ENCODE measurements at regions of chr10 and their contacts with region 1.

Region 1: GRCh38 chr10:70880077-70880534 is 8.3 kb downstream of the PCBD1 start:
- DNase-seq: peak; percentile 55 to 83
- ATAC-seq: peak; percentile 70 to 86 (median 79)
- H3K4me3 ChIP-seq: no peak overlapping the region
- H3K27ac ChIP-seq: no peak overlapping the region
- H3K4me1 ChIP-seq: peaks cover 0 to 9% (median 0%) of the 10 kb centered on the region in 9 donors
- H3K27me3 ChIP-seq: no peaks in the 10 kb centered on the region
- CTCF ChIP-seq: peak; percentile 77 to 96 (median 93)

Region 2: DNA sequence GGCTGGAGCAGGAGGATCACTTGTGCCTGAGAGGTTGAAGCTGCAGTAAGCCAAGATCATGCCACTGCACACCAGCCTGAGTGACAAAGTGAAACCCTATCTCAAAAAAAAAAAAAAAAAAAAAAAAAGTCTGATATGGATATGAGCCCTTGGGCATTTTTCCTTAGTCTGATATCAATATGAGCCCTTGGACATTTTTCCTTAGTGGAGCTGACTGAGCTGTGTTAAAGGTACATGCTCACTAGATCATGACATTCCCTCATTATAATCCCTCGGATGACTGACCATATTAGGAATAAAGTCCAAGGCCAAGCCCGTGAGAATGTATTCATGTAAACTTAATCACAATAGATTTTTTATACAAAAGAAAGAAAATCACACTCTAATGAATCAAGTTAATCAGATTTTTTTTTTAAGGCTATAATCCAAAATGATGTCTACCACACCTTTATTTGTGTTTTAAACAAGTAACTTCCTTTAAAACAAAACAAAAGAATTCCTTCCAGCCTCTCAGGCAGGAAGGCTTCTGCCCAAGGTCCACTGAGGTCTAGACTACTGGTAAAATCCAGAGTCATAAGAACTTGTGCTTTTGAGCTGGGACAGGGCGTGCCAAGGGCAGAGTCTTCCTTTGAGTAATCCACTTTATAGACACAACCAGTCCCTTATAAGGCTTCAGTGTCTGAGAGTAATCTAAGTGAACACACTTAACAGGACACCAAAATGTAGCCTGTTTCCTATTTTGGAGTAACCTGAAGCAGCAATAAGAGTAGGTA is 652.4 kb before region 1 on chr10:
- intact Hi-C with region 1: loop called in 1 of 10 experiments (anchors 10 kb)
- DNase-seq: no peak
- ATAC-seq: peak in 4 of 8 donors; percentile 29 to 56 (median 42)
- H3K4me3 ChIP-seq: no peak overlapping the region
- H3K27ac ChIP-seq: peak overlapping the region in 4 of 10 donors; percentile 10 to 37 (median 20)
- H3K4me1 ChIP-seq: peaks cover 0 to 53% (median 32%) of the 10 kb centered on the region in 9 donors
- H3K27me3 ChIP-seq: no peaks in the 10 kb centered on the region
- CTCF ChIP-seq: no peak

Region 3: GRCh38 chr10:70272925-70273316 is 607.2 kb before region 1 on chr10:
- intact Hi-C with region 1: no loop called
- DNase-seq: no peak
- ATAC-seq: peak; percentile 16 to 57 (median 34)
- H3K4me3 ChIP-seq: no peak overlapping the region
- H3K27ac ChIP-seq: no peak overlapping the region
- H3K4me1 ChIP-seq: peaks cover 0 to 20% (median 4%) of the 10 kb centered on the region in 9 donors
- H3K27me3 ChIP-seq: no peaks in the 10 kb centered on the region
- CTCF ChIP-seq: peak; percentile 25 to 68 (median 54)

Region 4: DNA sequence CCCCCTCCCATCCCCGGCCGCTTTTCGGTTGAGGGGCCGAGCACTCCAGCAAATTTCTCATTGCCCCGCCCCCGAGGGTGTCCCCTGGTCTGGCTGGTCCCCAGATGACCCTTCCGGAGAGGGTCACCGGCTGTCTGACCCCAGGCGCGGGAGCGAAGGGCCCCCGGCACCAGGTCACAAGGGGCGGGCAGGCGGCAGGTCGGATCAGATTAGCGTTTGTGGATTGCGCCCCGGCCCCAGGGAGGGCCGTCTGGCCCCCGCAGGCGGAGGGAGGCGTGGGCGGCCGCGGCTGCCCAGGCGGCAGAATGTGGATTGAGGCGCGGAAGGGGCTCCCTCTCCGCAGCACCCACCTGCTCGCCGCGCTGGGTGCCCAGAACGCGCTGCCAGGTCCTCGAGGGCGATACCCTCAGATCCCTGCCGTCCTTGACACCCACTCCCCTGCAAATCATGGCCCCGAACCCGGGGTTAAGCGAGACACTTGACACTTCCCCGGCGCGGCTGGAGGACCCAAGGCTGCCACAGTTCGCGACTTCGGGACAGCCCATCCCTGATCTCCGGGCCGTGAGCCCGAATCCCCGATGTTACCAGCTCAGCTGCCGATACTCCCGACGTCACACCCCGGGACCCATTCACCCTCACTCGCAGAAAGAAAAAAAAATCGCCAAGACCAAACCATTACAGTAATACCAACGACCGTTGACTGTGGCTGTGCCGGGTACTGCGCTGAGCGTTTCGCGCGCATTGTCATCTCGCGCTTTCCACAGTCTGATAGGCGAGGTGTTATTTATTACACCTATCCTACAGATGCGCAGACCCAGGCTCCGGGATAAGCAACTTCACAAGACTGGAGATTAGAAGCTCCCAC is 439.6 kb before region 1 on chr10:
- intact Hi-C with region 1: loop called in 1 of 10 experiments (anchors 10 kb)
- DNase-seq: no peak
- ATAC-seq: peak in 6 of 8 donors; percentile 3 to 25 (median 11)
- H3K4me3 ChIP-seq: peak overlapping the region; percentile 2 to 53 (median 40)
- H3K27ac ChIP-seq: no peak overlapping the region
- H3K4me1 ChIP-seq: peaks cover 6 to 25% (median 17%) of the 10 kb centered on the region in 9 donors
- H3K27me3 ChIP-seq: peaks cover 4 to 49% (median 28%) of the 10 kb centered on the region in 7 donors
- CTCF ChIP-seq: no peak

Region 5: DNA sequence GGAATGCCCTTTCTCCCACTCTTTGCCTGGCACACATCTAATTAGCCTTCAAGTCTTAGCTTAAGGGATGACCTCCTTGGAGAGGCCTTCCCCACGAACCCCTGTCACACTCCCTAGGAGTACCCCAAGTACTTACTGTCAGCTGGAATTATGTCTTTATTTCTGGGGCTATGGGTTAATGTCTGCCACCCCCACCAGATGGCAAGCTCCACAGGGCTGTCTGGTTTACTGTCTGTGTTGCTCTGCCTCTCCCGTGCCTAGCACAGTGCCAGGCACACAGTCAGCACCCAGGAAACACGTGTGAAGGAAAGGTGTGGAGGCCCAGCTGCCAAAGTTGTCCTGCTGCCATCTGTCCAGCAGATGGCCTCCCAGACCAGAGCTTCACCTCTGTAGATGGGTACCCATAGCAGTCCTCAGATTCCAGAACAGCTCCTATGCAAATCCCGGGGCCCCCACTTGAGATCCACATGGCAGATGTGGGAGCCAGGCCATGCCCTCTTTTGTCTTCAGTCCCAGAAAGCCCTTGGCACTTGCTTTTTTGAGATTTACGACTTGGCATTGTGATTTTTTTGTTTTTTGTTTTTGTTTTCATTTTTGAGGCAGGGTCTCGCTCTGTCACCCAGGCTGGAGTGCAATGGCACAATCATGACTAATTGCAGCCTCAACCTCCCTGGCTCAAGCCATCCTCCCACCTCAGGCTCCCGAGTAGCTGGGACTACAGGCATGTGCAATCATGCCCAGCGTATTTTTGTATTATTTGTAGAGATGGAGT is 418.7 kb before region 1 on chr10:
- intact Hi-C with region 1: loop called in 3 of 10 experiments (anchors 5 to 10 kb)
- DNase-seq: peak; percentile 52 to 56
- ATAC-seq: peak; percentile 42 to 73 (median 54)
- H3K4me3 ChIP-seq: no peak overlapping the region
- H3K27ac ChIP-seq: peak overlapping the region in 1 of 10 donors; percentile 7
- H3K4me1 ChIP-seq: peaks cover 16 to 56% (median 37%) of the 10 kb centered on the region in 9 donors
- H3K27me3 ChIP-seq: peaks cover 0 to 34% (median 0%) of the 10 kb centered on the region in 7 donors
- CTCF ChIP-seq: peak; percentile 82 to 95 (median 88)

Region 6: DNA sequence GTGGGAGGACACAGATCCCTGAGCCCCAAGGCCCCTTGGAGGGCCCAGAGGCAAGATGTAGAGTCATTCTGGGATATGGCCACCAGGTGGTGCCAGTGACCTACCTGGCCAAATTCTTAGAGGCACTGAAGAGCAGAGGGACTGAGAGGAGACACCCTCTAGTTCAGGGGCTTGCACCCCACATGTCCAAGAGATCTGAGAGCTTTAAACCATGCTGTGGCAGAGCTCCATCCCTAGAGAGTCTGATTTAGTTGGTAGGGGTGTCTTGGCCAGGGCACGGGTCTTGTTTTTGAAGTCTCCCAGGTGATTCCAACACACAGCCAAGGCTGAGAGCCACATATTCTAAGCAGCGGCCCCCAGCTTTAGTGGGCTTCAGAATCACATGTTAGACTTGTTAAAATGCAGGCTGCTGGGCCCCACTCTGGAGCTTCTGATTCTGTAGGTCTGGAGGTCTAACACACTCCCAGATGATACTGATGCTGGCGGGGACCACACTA is 330.1 kb before region 1 on chr10:
- intact Hi-C with region 1: loop called (anchors 1 to 5 kb)
- DNase-seq: peak; percentile 62 to 67
- ATAC-seq: peak; percentile 58 to 78 (median 70)
- H3K4me3 ChIP-seq: no peak overlapping the region
- H3K27ac ChIP-seq: no peak overlapping the region
- H3K4me1 ChIP-seq: peaks cover 0 to 24% (median 0%) of the 10 kb centered on the region in 9 donors
- H3K27me3 ChIP-seq: no peaks in the 10 kb centered on the region
- CTCF ChIP-seq: peak; percentile 85 to 97 (median 90)

Region 7: DNA sequence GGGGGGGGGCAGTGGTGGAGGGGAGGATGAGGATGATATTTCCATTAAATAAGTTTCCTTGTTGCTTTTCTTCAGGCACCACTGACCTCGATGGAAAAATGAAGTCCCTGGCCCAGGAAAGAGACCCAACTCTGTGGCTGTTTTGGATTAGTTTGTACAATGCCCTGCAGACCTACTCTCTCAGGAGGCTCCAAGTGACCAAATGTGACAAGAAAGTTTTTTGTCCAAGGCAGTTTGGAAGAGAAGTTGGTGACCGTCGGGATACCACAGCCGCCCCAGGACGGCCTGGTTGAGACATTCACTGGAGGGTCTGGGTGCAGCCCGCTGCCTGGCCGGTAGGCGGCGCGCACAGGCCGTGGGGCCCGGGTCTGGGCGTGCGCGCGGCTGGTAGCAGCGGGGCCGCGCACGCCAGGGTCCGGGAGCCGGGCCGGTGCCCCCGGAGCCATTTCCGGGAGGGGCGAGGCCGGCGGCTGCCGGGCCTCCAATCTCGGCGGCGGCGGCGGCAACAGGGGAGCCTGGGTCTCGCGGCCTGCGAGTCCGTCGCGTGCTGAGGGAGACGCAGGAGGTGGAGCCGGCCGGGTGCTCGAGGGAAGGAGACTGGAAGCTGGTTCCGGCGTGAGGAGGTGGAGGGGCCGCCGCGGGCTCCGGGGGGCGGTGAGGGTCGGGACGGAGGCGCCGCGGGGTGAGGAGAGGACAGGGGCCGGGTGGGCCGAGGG is 64.4 kb before region 1 on chr10 and contains the start of gene SGPL1:
- intact Hi-C with region 1: loop called (anchors 1 to 5 kb)
- DNase-seq: peak; percentile 83 to 90
- ATAC-seq: peak; percentile 97
- H3K4me3 ChIP-seq: peak within 1 kb of the TSS; percentile 57 to 84 (median 74)
- H3K27ac ChIP-seq: peak within 1 kb of the TSS; percentile 70 to 95 (median 86)
- H3K4me1 ChIP-seq: peaks cover 0 to 22% (median 9%) of the 10 kb centered on the region in 9 donors
- H3K27me3 ChIP-seq: no peaks in the 10 kb centered on the region
- CTCF ChIP-seq: peak; percentile 86 to 100 (median 97)
- total RNA-seq, gene SGPL1: 8.3 to 20.3 (median 13.9) TPM